MCF 10A (cell line): ENCODE measurements at regions of chr11 and their contacts with region 1.

Region 1: DNA sequence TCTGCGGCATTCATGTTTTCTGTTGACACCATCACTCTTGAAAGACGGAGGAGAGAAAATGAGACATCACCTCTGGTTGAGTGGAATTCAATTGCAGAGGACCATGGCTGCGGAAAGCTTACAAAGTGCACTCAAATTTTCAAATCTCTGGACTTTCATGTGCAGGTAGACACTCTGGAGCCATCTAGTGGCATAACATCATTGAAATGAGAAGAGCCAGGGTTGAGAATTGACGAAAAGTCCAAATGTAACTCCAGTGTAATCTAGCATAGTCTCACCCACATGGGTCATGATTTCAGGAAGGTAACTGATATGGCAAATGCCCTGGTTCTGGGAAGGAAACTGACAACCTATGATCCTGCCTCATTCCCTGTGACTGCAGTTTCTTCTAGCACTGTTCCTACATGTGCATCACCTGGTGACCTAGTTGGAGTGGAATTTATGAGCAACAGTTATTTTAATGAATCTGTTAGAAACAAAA is 687.8 kb downstream of the KCNA4 start:
- DNase-seq: peak; percentile 65
- H3K4me3 Mint-ChIP-seq: no peak overlapping the region
- H3K27ac Mint-ChIP-seq: peak overlapping the region; percentile 23
- H3K4me1 Mint-ChIP-seq: peaks cover 8% of the 10 kb centered on the region
- H3K27me3 Mint-ChIP-seq: no peaks in the 10 kb centered on the region
- CTCF ChIP-seq: peak; percentile 76

Region 2: DNA sequence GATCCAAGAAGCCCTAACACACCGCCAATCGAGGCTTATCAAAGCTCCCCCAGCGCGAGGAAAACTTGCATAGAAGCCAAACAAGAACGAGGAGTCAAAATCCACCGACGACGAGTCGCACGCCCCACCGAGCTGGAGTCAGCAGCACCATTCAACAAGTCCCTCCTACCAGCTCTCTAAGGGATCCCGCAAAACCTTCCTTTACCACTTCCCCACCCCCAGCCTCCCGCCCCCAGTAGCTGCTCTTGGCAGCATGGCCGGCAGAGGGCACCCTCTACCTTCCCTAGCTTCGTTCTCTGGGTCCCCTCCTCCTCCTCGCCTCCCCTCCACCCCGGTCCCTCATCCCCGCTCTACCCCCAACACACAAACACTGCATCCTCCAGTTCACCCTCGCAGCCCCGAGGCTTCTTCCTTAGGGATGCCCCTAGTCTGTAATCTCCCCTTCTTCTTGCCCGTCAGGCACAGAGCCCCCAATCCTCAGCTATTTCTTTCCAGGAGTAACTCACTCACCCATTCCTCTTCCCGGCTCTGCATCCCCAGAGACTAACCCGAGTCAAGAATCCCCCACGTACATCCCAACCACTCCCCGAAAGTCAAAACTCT is 1630.0 kb before region 1 on chr11:
- CTCF ChIA-PET with region 1: interaction called, 56 read pairs
- POLR2A ChIA-PET with region 1: interaction called, 6 read pairs
- intact Hi-C with region 1: loop called (anchors 1 kb)
- DNase-seq: peak; percentile 89
- H3K4me3 Mint-ChIP-seq: peak overlapping the region; percentile 97
- H3K27ac Mint-ChIP-seq: no peak overlapping the region
- H3K4me1 Mint-ChIP-seq: peaks cover 11% of the 10 kb centered on the region
- H3K27me3 Mint-ChIP-seq: no peaks in the 10 kb centered on the region
- CTCF ChIP-seq: peak; percentile 84

Region 3: DNA sequence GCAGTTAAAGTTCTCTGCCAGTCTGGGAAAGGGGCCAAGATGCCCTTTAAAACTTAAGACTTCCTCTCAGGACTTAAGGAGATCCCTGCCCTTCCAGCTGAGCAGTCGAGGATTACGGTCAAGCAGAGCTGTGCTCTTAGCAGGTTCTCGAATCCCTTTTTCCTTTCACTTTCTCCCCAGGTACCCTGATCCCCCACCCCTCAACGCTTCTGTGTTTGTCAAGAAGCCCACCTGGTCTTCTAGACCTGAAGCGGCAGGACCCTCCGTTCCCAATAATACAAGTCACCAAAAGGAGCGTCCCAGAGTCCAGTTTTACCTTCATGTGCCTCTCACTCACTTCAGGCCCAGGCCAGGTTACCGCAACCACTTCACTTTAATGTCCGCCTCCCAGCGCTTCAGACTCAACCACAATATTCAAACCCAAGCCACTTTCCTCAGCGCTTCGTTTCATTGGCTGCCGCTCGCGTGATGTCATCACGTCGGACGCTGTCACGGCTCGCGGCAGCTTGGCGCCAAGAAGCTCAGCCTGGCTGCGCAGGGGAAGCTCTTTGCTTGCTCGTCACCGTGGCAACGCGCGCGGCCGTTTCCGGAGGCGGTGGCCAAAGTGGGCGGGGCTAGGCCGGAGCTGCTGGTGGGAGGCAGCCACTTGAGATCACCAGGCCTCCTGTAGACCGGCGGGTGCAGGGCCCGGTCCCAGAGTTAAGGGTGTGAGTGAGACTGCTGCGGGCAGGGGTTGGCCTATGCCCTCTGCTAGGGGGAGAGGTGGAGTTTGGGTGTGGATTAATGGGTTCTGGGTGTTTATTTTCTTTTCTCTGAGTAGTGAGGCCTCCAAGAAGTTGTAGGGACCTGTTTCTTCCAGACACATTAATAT is 1221.0 kb before region 1 on chr11 and contains the starts of genes KIF18A and METTL15:
- CTCF ChIA-PET with region 1: no interaction called
- POLR2A ChIA-PET with region 1: no interaction called
- intact Hi-C with region 1: loop called (anchors 10 kb)
- DNase-seq: peak; percentile 98
- H3K4me3 Mint-ChIP-seq: peak within 1 kb of the TSS; percentile 98
- H3K27ac Mint-ChIP-seq: peak within 1 kb of the TSS; percentile 100
- H3K4me1 Mint-ChIP-seq: peaks cover 48% of the 10 kb centered on the region
- H3K27me3 Mint-ChIP-seq: no peaks in the 10 kb centered on the region
- CTCF ChIP-seq: no peak
- total RNA-seq, gene KIF18A: 8.9 and 12.9 TPM in 2 replicates
- total RNA-seq, gene METTL15: 16.8 and 19.9 TPM in 2 replicates

Region 4: DNA sequence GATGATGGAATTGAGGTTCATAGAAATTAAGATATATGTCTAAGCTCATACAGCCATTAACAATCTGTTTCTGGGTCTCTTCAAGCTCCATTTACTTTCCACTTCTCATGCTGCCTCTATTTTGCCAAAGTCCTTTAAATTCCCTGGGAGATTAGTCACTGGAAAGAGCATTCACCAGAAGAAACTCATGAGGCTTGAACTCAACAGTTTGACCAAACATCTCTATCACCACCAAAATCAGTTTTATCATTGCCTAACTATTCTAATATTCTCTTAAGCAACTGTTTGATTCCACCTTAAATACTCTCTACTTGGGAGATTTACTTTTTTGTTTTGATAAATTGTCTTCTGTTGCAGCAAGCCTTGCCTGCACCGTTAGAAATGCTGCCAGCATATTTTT is 193.5 kb before region 1 on chr11:
- CTCF ChIA-PET with region 1: no interaction called
- POLR2A ChIA-PET with region 1: no interaction called
- intact Hi-C with region 1: no loop called
- DNase-seq: no peak
- H3K4me3 Mint-ChIP-seq: no peak overlapping the region
- H3K27ac Mint-ChIP-seq: no peak overlapping the region
- H3K4me1 Mint-ChIP-seq: peaks cover 7% of the 10 kb centered on the region
- H3K27me3 Mint-ChIP-seq: no peaks in the 10 kb centered on the region
- CTCF ChIP-seq: no peak

Region 5: DNA sequence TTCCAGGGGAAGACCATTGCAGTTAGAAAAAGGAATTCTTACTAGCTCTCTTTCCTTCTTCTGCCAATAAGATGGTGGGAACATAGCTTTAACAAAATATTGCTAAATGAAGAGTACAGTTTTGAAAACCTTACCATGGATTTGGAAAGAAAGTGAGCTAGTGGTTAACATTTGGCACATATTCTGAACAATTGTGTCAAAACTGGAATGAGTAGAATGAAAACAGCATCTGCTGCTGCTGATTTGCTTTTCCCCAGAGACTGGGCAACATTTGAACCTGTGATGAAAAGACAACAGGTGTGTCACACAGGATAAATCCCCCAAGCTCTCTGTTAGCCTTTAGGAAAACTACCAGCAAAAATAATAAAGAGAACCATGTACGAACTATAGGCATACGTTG is 73.6 kb before region 1 on chr11:
- CTCF ChIA-PET with region 1: interaction called, 63 read pairs
- POLR2A ChIA-PET with region 1: interaction called, 8 read pairs
- intact Hi-C with region 1: no loop called
- DNase-seq: no peak
- H3K4me3 Mint-ChIP-seq: no peak overlapping the region
- H3K27ac Mint-ChIP-seq: no peak overlapping the region
- H3K4me1 Mint-ChIP-seq: peaks cover under 1% of the 10 kb centered on the region
- H3K27me3 Mint-ChIP-seq: no peaks in the 10 kb centered on the region
- CTCF ChIP-seq: no peak

Region 6: GRCh38 chr11:29272019-29272654 is 56.9 kb before region 1 on chr11:
- CTCF ChIA-PET with region 1: interaction called, 66 read pairs
- POLR2A ChIA-PET with region 1: no interaction called
- intact Hi-C with region 1: loop called (anchors 1 kb)
- DNase-seq: peak; percentile 47
- H3K4me3 Mint-ChIP-seq: no peak overlapping the region
- H3K27ac Mint-ChIP-seq: no peak overlapping the region
- H3K4me1 Mint-ChIP-seq: no peaks in the 10 kb centered on the region
- H3K27me3 Mint-ChIP-seq: no peaks in the 10 kb centered on the region
- CTCF ChIP-seq: peak; percentile 50

Region 7: GRCh38 chr11:29293825-29294224 is 35.2 kb before region 1 on chr11:
- CTCF ChIA-PET with region 1: interaction called, 20 read pairs
- POLR2A ChIA-PET with region 1: no interaction called
- intact Hi-C with region 1: no loop called
- DNase-seq: peak; percentile 55
- H3K4me3 Mint-ChIP-seq: peak overlapping the region; percentile 45
- H3K27ac Mint-ChIP-seq: peak overlapping the region; percentile 5
- H3K4me1 Mint-ChIP-seq: no peaks in the 10 kb centered on the region
- H3K27me3 Mint-ChIP-seq: no peaks in the 10 kb centered on the region
- CTCF ChIP-seq: no peak

Region 8: GRCh38 chr11:29343465-29344333 is 14.7 kb after region 1 on chr11:
- CTCF ChIA-PET with region 1: interaction called, 20 read pairs
- POLR2A ChIA-PET with region 1: no interaction called
- intact Hi-C with region 1: no loop called
- DNase-seq: peak; percentile 63
- H3K4me3 Mint-ChIP-seq: no peak overlapping the region
- H3K27ac Mint-ChIP-seq: no peak overlapping the region
- H3K4me1 Mint-ChIP-seq: no peaks in the 10 kb centered on the region
- H3K27me3 Mint-ChIP-seq: no peaks in the 10 kb centered on the region
- CTCF ChIP-seq: peak; percentile 89